Activated CD8-positive, alpha-beta T cell treated with anti-CD3 and anti-CD28 coated beads for 36 hours (primary cell): ENCODE measurements at regions of chr1 and their contacts with region 1.

Region 1: GRCh38 chr1:9651565-9652378 is at the start of gene PIK3CD:
- DNase-seq: peak; percentile 59
- ATAC-seq: peak; percentile 34
- H3K4me3 Mint-ChIP-seq: peak within 1 kb of the TSS; percentile 95
- H3K27ac Mint-ChIP-seq: peak within 1 kb of the TSS; percentile 96
- H3K4me1 Mint-ChIP-seq: peaks cover 61% of the 10 kb centered on the region
- H3K27me3 Mint-ChIP-seq: no peaks in the 10 kb centered on the region
- CTCF ChIP-seq: no peak
- total RNA-seq, gene PIK3CD: 152 to 158 TPM

Region 2: DNA sequence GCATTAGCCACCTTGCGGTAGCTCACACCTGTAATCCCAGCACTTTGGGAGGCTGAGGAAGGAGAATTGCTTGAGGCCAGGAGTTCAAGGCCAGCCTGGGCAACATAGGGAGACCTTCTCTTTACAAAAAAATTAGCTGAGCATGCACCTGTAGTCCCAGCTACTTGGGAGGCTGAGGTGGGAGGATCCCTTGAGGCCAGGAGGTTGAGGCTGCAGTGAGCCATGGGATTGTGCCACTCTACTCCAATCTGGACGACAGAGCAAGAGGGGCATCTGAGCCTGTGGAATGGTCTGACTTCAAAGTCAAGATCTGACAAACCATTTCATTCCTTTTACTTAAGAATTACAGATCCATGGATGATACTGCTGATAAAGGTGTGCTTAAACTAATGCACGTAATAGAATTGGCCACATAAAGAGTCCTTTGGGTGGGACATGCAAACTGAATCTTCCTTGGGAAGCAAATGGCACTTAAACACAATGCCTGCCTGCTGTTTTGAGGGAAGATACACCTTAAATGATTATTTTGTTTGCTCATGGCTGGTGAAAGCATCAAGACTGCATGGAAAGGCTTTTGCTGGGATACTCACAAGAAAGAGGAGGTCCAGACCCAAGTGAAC is 65.5 kb before region 1 on chr1:
- CTCF ChIA-PET with region 1: no interaction called
- POLR2A ChIA-PET with region 1: no interaction called
- intact Hi-C with region 1: no loop called
- DNase-seq: no peak
- ATAC-seq: no peak
- H3K4me3 Mint-ChIP-seq: no peak overlapping the region
- H3K27ac Mint-ChIP-seq: no peak overlapping the region
- H3K4me1 Mint-ChIP-seq: peaks cover 15% of the 10 kb centered on the region
- H3K27me3 Mint-ChIP-seq: no peaks in the 10 kb centered on the region
- CTCF ChIP-seq: no peak

Region 3: DNA sequence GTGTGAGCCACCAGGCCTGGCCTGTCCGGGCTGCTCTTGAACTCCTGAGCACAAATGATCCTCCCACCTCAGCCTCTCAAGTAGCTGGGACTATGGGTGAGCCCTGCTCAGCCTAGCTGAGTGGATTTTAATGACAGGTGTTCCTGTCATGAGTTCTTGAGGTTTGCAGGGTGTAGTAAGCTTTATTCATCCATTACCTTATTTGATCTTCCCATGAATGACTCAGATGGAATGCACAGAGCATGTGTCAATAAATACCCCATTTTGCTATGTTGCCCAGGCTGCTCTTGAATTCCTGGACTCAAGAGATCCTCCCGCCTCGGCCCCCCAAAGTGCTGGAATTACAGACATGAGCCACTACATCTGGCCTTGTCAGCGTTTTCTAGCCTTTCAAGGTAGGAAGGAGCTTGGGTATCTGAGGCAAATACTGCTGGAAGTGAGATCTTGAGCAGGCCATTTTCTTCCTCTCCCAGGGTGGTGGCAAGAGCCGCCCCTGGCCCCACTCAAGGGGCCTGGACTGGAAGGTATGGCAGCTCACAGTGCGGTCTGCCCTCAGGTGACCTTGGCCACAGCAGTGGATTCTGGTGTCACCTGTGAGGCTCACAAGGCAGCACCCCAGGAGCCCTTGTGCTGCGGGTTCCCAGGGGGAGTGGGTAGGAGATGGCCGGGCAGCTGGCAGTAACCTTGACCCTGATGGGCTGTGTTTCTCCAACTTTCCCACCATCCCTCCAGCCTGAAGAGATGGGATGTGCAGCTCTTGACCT is 19.8 kb after region 1 on chr1:
- CTCF ChIA-PET with region 1: interaction called, 6 read pairs
- POLR2A ChIA-PET with region 1: interaction called, 65 read pairs
- intact Hi-C with region 1: loop called (anchors 2 kb)
- DNase-seq: peak; percentile 38
- ATAC-seq: peak; percentile 65
- H3K4me3 Mint-ChIP-seq: no peak overlapping the region
- H3K27ac Mint-ChIP-seq: peak overlapping the region; percentile 91
- H3K4me1 Mint-ChIP-seq: peaks cover 72% of the 10 kb centered on the region
- H3K27me3 Mint-ChIP-seq: no peaks in the 10 kb centered on the region
- CTCF ChIP-seq: no peak

Region 4: GRCh38 chr1:9689011-9689706 is 37.4 kb after region 1 on chr1:
- CTCF ChIA-PET with region 1: interaction called, 4 read pairs
- POLR2A ChIA-PET with region 1: interaction called, 60 read pairs
- intact Hi-C with region 1: loop called (anchors 5 kb)
- DNase-seq: peak; percentile 89
- ATAC-seq: peak; percentile 74
- H3K4me3 Mint-ChIP-seq: peak overlapping the region; percentile 77
- H3K27ac Mint-ChIP-seq: peak overlapping the region; percentile 71
- H3K4me1 Mint-ChIP-seq: peaks cover 70% of the 10 kb centered on the region
- H3K27me3 Mint-ChIP-seq: no peaks in the 10 kb centered on the region
- CTCF ChIP-seq: no peak